CD4-positive, alpha-beta T cell (primary cell): ENCODE measurements at regions of chr12 and their contacts with region 1.

Region 1: DNA sequence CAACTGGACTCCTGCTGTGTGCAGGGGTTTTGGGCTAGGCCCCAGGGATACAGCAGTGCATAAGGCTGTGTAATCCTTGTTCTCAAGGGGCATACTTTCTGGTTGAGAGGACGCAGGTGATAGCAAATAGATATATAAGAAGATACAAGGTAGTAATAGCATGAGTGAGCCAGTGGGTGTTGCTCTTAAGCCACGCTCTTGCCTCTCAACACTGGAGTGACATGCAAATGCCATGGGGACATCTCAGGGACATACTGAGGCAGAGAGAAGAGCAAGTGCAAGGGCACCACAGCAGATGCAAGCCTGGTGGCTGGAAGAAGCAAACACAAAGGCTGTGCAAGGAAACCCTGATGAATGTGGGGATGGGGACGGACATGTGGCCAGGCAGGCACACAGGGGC is 223.3 kb downstream of the CHST11 start:
- DNase-seq: peak in 9 of 14 experiments; percentile 13 to 71 (median 25)
- ATAC-seq: peak; percentile 56
- H3K4me3 ChIP-seq: no peak overlapping the region
- H3K4me3 Mint-ChIP-seq: peak overlapping the region; percentile 43
- H3K27ac ChIP-seq: no peak overlapping the region
- H3K27ac Mint-ChIP-seq: peak overlapping the region; percentile 74
- H3K4me1 ChIP-seq: peaks cover 52% of the 10 kb centered on the region
- H3K4me1 Mint-ChIP-seq: peaks cover 59% of the 10 kb centered on the region
- H3K27me3 ChIP-seq: no peaks in the 10 kb centered on the region
- H3K27me3 Mint-ChIP-seq: no peaks in the 10 kb centered on the region
- CTCF ChIP-seq: no peak

Region 2: DNA sequence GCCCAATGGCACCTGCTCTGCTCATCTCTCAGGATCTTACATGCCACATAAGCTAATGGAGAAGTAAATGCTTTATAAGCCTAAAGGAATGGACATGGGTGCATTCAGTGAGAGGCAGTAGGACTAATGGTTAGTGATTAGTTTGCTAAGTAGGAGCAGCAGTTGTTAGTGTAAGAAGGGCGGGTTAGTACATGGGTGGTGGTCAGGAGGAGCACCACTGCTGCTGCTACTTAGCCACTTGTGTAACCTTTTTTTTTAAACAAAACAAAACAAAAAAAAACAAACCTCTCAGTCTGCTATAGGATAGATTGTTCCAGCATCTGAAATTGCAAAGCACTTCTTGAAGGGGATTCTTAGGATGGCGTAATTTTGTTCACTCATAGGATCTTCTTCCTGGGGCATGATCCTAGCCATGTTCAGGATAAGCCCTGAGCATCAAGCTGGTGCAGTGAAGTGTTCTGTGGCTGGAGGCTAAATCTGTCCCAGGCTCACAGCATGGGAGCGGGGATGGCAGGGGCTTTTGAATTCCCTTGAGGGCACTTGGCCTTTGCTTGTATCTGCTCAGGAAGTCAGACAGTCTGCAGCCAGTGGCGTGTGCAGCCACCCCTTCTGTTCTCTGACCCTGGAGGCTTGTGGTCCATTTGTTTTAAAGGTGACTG is 159.7 kb before region 1 on chr12:
- CTCF ChIA-PET with region 1: no interaction called
- POLR2A ChIA-PET with region 1: no interaction called
- intact Hi-C with region 1: no loop called
- DNase-seq: no peak
- ATAC-seq: no peak
- H3K4me3 ChIP-seq: no peak overlapping the region
- H3K4me3 Mint-ChIP-seq: no peak overlapping the region
- H3K27ac ChIP-seq: peak overlapping the region in 1 of 2 donors; percentile 7
- H3K27ac Mint-ChIP-seq: no peak overlapping the region
- H3K4me1 ChIP-seq: peaks cover 43% of the 10 kb centered on the region
- H3K4me1 Mint-ChIP-seq: peaks cover 92% of the 10 kb centered on the region
- H3K27me3 ChIP-seq: no peaks in the 10 kb centered on the region
- H3K27me3 Mint-ChIP-seq: no peaks in the 10 kb centered on the region
- CTCF ChIP-seq: no peak

Region 3: DNA sequence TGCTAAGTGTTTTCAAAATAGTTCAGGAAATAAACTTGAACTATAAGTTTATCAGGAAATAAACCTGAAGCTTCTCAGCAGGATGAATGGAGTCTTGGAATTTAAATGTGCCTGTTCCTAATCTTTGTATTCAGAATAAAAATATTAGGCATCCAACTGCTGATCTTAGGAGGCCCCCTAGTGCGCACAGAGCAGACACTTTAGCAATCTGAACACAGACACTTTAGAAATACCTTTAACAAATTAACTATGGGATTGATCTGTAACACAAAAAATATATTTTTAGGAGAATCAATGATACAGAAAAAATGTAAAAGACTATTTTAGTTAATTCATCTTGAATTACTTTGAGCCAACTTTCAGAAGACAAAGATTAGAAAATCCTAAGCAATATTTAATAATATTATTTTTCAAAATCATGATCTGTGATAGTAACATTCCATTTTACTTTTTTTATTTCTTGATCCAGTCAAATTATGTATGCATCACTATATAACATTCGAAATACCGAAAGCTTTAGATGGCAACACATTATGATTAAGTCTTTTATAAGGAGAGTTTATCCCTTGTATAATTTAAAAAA is 197.1 kb after region 1 on chr12:
- CTCF ChIA-PET with region 1: no interaction called
- POLR2A ChIA-PET with region 1: no interaction called
- intact Hi-C with region 1: loop called (anchors 1 to 5 kb)
- DNase-seq: peak; percentile 14 to 61 (median 27)
- ATAC-seq: peak; percentile 56
- H3K4me3 ChIP-seq: no peak overlapping the region
- H3K4me3 Mint-ChIP-seq: no peak overlapping the region
- H3K27ac ChIP-seq: no peak overlapping the region
- H3K27ac Mint-ChIP-seq: no peak overlapping the region
- H3K4me1 ChIP-seq: no peaks in the 10 kb centered on the region
- H3K4me1 Mint-ChIP-seq: no peaks in the 10 kb centered on the region
- H3K27me3 ChIP-seq: no peaks in the 10 kb centered on the region
- H3K27me3 Mint-ChIP-seq: no peaks in the 10 kb centered on the region
- CTCF ChIP-seq: peak; percentile 86